Activated CD8-positive, alpha-beta T cell treated with anti-CD3 and anti-CD28 coated beads, Interleukin-2, amount 10 ng/mL, durations not matched to agents 7 days and 5 days (primary cell): ENCODE measurements at regions of chr1 and their contacts with region 1.

Region 1: GRCh38 chr1:43934101-43934985 is 742 bp downstream of the ARTN start:
- DNase-seq: peak; percentile 70
- ATAC-seq: peak; percentile 64
- H3K4me3 Mint-ChIP-seq: no peak overlapping the region
- H3K27ac Mint-ChIP-seq: no peak overlapping the region
- H3K4me1 Mint-ChIP-seq: peaks cover 23% of the 10 kb centered on the region
- H3K27me3 Mint-ChIP-seq: peaks cover 20% of the 10 kb centered on the region

Region 2: GRCh38 chr1:43706598-43707495 is 227.5 kb before region 1 on chr1:
- CTCF ChIA-PET with region 1: interaction called, 24 read pairs
- POLR2A ChIA-PET with region 1: interaction called, 3 read pairs
- DNase-seq: peak; percentile 94
- ATAC-seq: peak; percentile 98
- H3K4me3 Mint-ChIP-seq: peak overlapping the region; percentile 91
- H3K27ac Mint-ChIP-seq: peak overlapping the region; percentile 82
- H3K4me1 Mint-ChIP-seq: peaks cover 40% of the 10 kb centered on the region
- H3K27me3 Mint-ChIP-seq: no peaks in the 10 kb centered on the region

Region 3: GRCh38 chr1:43783671-43784205 is 150.6 kb before region 1 on chr1:
- CTCF ChIA-PET with region 1: interaction called, 17 read pairs
- POLR2A ChIA-PET with region 1: no interaction called
- DNase-seq: no peak
- ATAC-seq: no peak
- H3K4me3 Mint-ChIP-seq: no peak overlapping the region
- H3K27ac Mint-ChIP-seq: no peak overlapping the region
- H3K4me1 Mint-ChIP-seq: peaks cover 38% of the 10 kb centered on the region
- H3K27me3 Mint-ChIP-seq: no peaks in the 10 kb centered on the region

Region 4: DNA sequence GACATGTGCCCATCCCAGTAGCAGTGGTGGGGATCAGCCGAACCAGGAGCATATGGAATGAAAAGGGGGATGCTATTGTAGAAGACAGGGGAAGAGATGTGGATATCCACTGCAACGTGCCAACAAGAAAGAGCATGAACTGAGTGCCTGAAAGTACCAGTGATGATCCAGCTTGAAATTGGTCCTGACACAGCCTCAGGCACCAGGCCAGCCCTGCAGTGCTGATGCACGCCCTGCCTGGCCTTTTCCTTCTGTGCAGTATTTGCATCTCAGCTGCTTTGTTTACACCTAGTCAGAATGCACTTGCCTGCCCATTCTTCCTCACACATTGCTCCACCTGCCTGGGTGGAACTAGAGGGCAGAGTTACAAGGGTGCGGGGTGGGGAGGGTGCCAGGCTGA is 51.0 kb before region 1 on chr1:
- CTCF ChIA-PET with region 1: interaction called, 14 read pairs
- POLR2A ChIA-PET with region 1: no interaction called
- DNase-seq: no peak
- ATAC-seq: no peak
- H3K4me3 Mint-ChIP-seq: no peak overlapping the region
- H3K27ac Mint-ChIP-seq: no peak overlapping the region
- H3K4me1 Mint-ChIP-seq: peaks cover 2% of the 10 kb centered on the region
- H3K27me3 Mint-ChIP-seq: no peaks in the 10 kb centered on the region

Region 5: DNA sequence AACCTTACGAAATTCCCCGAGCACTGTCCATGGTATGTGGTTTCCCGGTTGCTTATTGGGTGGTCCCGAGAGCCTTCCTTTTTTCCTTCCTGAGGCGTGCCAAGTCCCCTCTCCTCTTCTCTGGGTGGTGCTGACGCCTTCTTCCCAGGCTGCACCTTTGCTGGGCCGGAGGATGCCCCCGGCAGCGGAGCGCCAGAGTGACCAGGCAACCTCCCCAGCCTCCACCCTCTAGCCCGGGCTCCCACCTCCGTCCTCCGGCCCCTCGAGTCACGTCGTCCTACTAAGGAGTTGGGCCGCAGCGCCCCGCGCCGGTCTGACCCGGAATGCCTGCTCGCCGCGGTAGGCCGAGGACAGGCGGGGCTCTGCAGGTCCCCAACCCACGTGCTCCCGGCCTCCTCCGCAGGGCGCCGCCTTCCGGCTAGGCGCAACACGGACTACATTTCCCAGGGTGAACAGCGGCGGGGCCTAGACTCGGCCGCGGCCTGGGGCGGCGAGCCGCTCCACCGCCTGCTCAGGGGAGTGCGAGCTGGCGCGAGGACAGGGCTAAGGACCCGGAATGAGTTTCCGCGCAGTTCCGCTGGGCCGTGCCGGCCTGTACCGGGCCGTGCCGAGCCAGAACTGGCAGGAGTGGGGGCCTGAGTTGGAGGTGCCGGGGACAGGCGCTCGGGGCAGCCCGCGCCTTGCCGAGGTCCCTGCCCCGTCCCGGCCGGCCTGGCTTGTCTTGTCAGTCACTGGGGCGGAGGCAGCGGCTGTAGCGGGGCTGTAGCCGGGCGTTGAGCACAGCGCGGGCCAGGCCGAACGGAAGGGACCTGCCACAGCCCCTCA is 12.1 kb after region 1 on chr1 and contains the start of gene IPO13:
- CTCF ChIA-PET with region 1: interaction called, 148 read pairs
- POLR2A ChIA-PET with region 1: interaction called, 5 read pairs
- DNase-seq: peak; percentile 97
- ATAC-seq: peak; percentile 97
- H3K4me3 Mint-ChIP-seq: peak within 1 kb of the TSS; percentile 82
- H3K27ac Mint-ChIP-seq: peak within 1 kb of the TSS; percentile 94
- H3K4me1 Mint-ChIP-seq: peaks cover 34% of the 10 kb centered on the region
- H3K27me3 Mint-ChIP-seq: no peaks in the 10 kb centered on the region
- total RNA-seq, gene IPO13: 23.7 to 24.5 TPM

Region 6: GRCh38 chr1:44049839-44050238 is 115.5 kb after region 1 on chr1:
- CTCF ChIA-PET with region 1: interaction called, 11 read pairs
- POLR2A ChIA-PET with region 1: no interaction called
- DNase-seq: no peak
- ATAC-seq: no peak
- H3K4me3 Mint-ChIP-seq: no peak overlapping the region
- H3K27ac Mint-ChIP-seq: no peak overlapping the region
- H3K4me1 Mint-ChIP-seq: peaks cover 11% of the 10 kb centered on the region
- H3K27me3 Mint-ChIP-seq: peaks cover 16% of the 10 kb centered on the region